ENCODE measurements at regions of chr18 and their contacts with region 1.

Region 1: GRCh38 chr18:71168557-71169145 is 879.8 kb downstream of the SOCS6 start:
- DNase-seq: no peak
- H3K4me3 ChIP-seq: peak overlapping the region in 2 of 3 donors; percentile 0 to 6
- H3K27ac ChIP-seq: no peak overlapping the region
- H3K4me1 ChIP-seq: no peaks in the 10 kb centered on the region
- H3K27me3 ChIP-seq: no peaks in the 10 kb centered on the region
- CTCF ChIP-seq: no peak
- POLR2A ChIP-seq: no peak

Region 2: DNA sequence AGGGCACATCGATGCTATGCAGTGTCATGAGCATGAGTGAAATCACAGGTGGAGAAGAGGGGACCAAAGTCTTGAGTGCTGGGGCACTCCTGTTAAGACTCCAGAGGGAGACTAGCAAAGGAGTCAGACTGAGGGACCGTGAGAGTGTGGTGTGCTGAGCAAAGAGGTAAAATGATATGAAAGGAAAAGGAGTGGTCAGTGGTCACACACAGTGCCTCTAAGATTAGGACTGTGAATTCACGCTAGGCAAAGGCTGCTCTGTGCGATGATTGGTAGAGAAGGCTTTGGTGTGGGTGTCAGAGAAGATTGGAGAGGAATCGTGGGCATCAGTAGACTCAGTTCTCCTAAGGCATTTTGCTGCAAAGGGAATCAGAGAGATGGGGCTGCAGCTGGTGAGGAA is 867.0 kb before region 1 on chr18:
- intact Hi-C with region 1: loop called (anchors 10 kb)
- DNase-seq: no peak
- H3K4me3 ChIP-seq: no peak overlapping the region
- H3K27ac ChIP-seq: no peak overlapping the region
- H3K4me1 ChIP-seq: no peaks in the 10 kb centered on the region
- H3K27me3 ChIP-seq: no peaks in the 10 kb centered on the region
- CTCF ChIP-seq: no peak
- POLR2A ChIP-seq: no peak

Region 3: DNA sequence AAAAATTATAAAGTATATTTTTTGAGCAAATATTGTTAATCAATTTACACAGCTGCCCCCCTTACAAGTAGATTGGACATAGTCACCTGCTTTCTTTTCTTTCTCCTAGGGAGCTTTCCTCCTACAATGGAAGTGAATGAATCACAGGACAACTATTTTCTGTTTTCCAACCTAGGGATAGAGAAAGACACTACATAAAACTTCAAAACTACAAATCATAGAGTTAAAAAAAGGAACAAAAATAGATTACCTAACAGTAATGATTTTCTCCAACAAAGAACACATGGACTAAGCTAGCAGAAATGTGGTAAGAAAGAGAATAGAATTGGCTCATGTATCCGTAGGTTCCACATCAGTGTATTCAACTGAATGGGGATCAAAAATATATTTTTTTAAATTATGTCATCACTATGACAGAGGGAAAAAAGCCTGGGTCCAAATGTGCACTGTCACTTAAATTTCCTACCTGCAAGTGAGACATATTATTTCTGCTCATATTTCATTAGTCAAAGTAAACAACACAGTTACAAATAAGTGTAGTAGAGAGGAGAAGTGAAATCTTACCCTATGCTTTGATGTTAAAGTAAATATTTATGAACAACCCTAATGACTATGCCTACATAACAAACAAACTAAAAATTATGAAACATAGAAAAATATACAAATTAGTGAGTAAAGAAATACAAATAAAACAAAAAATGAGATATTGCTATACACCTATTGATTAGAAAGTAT is 123.2 kb before region 1 on chr18:
- intact Hi-C with region 1: no loop called
- DNase-seq: no peak
- H3K4me3 ChIP-seq: no peak overlapping the region
- H3K27ac ChIP-seq: no peak overlapping the region
- H3K4me1 ChIP-seq: no peaks in the 10 kb centered on the region
- H3K27me3 ChIP-seq: no peaks in the 10 kb centered on the region
- CTCF ChIP-seq: no peak
- POLR2A ChIP-seq: no peak

Measured in breast epithelium (tissue), 4 donors.